Gastrocnemius medialis (tissue), 4 donors: ENCODE measurements at regions of chr4 and their contacts with region 1.

Region 1: GRCh38 chr4:10018818-10019461 is 2.4 kb downstream of the SLC2A9 start:
- DNase-seq: peak; percentile 89 to 96
- ATAC-seq: peak; percentile 82 to 91
- H3K4me3 ChIP-seq: peak overlapping the region; percentile 45 to 51 (median 48)
- H3K27ac ChIP-seq: peak overlapping the region; percentile 82 to 91 (median 88)
- H3K4me1 ChIP-seq: peaks cover 16 to 34% of the 10 kb centered on the region in 2 donors
- H3K27me3 ChIP-seq: no peaks in the 10 kb centered on the region
- CTCF ChIP-seq: peak; percentile 98 to 100 (median 99)
- POLR2A ChIP-seq: peak; percentile 38 to 44

Region 2: DNA sequence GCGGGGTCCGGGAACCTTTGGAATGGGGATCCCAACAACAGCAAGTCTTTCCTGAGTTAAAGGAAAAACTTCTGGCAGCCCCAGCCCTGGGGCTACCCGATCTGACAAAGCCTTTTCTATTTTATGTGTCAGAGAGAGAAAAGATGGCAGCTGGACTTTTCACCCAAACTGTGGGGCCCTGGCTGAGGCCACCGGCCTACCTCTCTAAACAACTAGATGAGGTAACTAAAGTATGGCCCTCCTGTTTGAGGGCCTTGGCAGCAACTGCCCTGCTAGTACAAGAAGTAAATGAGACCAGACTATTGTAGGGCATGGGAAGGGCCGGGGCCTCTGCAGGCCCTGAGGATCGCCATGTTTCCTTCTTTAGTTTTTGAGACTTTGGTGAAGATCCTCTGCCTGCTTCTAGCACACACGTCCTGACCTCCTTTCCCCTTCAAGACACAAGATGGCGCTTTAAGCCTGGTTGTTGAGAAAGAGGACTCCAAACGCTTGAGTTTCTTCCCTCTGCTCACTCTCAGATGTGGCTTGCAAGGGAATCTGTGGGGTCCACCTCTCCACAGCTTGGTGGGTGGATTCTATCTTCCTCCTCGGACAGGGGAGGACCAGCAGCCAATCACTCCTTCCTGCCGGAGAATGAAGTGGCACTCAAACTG is 256.0 kb before region 1 on chr4:
- in situ Hi-C with region 1: loop called (anchors 5 to 10 kb)
- intact Hi-C with region 1: loop called (anchors 1 kb)
- DNase-seq: peak; percentile 10 to 21
- ATAC-seq: no peak
- H3K4me3 ChIP-seq: no peak overlapping the region
- H3K27ac ChIP-seq: no peak overlapping the region
- H3K4me1 ChIP-seq: no peaks in the 10 kb centered on the region
- H3K27me3 ChIP-seq: peaks cover 0 to 6% (median 0%) of the 10 kb centered on the region in 3 donors
- CTCF ChIP-seq: peak; percentile 26 to 61 (median 58)
- POLR2A ChIP-seq: no peak

Region 3: DNA sequence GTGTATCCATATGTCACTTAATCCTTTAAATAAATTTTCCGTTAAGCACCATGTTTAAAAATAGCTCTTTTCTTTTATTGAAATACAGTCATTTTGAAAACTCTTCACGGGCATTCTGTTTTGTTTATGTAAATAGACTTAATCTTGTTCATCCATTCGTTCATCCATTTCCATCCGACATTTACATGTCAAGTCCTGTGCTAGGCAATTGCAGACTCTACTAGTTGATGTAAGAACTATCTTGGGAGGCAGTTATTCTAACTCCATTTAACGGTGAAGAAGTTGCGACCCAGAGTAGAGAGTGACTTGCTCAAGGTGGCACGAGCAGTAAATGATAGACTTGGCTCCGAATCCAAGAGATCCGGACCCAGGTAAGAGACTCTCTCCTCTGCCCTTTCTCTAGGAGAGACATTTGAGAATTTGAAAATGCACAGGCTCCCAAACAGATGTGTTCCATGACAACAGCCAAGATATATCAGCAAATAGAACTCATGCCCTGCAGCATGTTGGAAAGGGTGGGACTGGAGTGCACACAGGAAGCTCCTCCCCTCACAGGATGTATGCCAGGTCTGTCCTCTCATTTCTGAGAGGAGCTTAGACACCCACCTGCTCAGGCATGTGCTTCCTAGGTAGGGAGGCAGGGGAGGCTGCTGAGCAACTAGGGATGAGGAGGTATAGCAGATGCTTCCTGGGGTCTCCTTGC is 173.0 kb before region 1 on chr4:
- in situ Hi-C with region 1: no loop called
- intact Hi-C with region 1: no loop called
- DNase-seq: no peak
- ATAC-seq: no peak
- H3K4me3 ChIP-seq: no peak overlapping the region
- H3K27ac ChIP-seq: no peak overlapping the region
- H3K4me1 ChIP-seq: no peaks in the 10 kb centered on the region
- H3K27me3 ChIP-seq: no peaks in the 10 kb centered on the region
- CTCF ChIP-seq: no peak
- POLR2A ChIP-seq: no peak

Region 4: DNA sequence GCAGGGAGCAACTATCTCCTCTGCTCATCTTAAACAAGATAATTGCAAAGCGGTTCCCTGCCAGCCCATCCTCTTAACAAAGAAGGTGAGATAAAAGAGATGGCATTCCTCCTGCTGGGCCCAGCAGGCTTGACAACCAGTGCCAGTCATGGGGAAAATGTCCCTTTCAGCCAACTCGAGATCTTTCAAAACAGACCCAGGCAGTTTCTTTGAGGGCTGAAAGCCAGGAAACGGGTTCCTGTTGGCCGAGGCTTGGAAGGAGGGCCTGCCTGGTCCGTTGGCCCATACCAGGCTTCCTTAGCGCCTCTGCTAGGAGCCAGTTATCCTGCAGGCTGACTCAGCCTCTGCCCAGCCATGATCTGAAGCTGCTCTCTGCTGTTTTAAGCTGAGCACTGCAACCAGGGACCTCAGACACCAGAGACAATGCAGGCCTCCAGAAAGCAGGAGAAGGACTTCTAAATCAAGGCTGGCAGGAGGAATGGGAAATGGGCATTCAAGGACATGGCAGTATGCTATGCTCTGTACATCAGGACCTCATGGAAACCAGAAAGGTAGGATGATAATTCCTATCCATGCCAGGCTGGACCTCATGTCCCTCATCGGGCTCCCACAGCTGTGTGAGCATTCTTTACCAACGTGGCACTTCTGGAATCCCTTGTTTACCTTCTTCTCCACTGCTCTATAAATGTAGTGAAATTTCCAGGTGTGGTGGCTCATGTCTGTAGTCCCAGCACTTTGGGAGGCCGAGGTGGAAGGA is 44.8 kb after region 1 on chr4:
- in situ Hi-C with region 1: no loop called
- intact Hi-C with region 1: loop called (anchors 1 kb)
- DNase-seq: peak; percentile 41 to 70
- ATAC-seq: peak; percentile 91 to 96
- H3K4me3 ChIP-seq: no peak overlapping the region
- H3K27ac ChIP-seq: peak overlapping the region; percentile 1 to 55 (median 27)
- H3K4me1 ChIP-seq: peaks cover 0 to 4% of the 10 kb centered on the region in 2 donors
- H3K27me3 ChIP-seq: no peaks in the 10 kb centered on the region
- CTCF ChIP-seq: peak; percentile 46 to 72 (median 64)
- POLR2A ChIP-seq: no peak

Region 5: DNA sequence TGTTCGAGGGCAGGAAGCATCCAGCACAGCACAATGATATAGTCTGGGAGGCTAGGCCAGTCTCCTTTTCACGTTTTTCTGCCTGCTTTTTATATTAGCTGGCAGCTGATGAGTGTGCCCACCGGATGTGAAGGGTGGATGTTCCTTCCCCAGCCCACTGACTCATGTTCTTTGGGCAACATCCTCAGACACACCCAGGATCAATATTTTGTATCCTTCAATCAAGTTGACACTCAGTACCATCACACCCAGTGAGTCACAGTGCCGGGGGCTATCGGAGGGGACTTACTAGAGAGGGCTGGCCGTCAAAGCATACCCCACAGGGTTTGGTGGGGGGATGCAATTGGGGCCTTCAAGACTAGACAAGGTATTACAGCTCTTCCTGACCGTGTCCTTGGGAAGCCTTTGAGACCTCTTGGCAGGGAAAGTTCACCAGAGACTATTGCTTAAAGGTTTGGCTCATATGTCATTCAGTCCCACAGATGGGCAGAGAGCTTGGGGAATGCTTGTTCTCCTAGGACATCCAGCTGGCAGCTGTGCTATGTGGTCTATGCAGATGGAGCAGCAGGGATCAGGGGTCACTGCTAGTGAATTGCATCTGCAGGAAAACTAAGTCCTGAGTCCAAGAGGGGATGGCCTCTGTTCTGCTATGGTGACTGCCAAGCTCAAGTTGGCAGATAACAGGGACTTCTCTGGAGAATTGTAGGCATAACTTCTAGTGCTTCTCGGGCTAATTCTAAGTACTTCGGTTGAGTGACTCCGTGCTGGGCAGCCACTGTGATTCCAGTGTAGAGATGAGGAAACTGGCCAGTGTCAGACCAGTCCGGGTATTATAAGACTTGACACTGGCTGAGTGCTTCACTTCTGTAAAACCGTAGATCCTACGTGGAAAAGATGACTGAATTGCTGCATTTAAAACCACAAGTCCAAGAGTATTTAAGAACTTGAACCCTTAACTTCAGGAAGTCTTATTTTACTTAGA is 110.5 kb after region 1 on chr4:
- in situ Hi-C with region 1: no loop called
- intact Hi-C with region 1: loop called (anchors 1 kb)
- DNase-seq: peak; percentile 23 to 76
- ATAC-seq: peak; percentile 96 to 99
- H3K4me3 ChIP-seq: no peak overlapping the region
- H3K27ac ChIP-seq: peak overlapping the region in 3 of 4 donors; percentile 31 to 51 (median 48)
- H3K4me1 ChIP-seq: peaks cover 18 to 25% of the 10 kb centered on the region in 2 donors
- H3K27me3 ChIP-seq: no peaks in the 10 kb centered on the region
- CTCF ChIP-seq: no peak
- POLR2A ChIP-seq: no peak

Region 6: DNA sequence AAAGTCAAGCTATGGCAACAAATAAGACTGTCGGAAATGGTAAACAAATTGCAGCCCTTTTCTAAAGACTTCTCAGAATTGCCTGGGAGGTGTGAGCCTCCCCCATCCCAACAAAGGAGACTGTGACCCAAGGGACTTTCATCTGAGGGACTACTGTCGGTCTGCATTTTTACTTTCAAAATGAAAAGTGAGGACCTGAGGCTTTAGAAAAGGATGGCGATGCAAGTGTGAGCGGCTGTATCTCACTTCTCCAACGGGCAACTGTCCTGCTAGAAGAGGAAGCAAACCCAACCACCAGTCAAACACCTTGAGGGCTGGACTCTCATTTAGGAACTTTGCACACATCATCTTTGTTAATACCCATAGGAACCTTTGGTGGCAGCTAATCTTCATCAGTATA is 728.2 kb after region 1 on chr4:
- in situ Hi-C with region 1: no loop called
- intact Hi-C with region 1: no loop called
- DNase-seq: no peak
- ATAC-seq: no peak
- H3K4me3 ChIP-seq: no peak overlapping the region
- H3K27ac ChIP-seq: no peak overlapping the region
- H3K4me1 ChIP-seq: no peaks in the 10 kb centered on the region
- H3K27me3 ChIP-seq: no peaks in the 10 kb centered on the region
- CTCF ChIP-seq: no peak
- POLR2A ChIP-seq: no peak